ENCODE measurements at regions of chr11 and their contacts with region 1.

Region 1: GRCh38 chr11:43895601-43896000 is 15.0 kb downstream of the ALKBH3 start:
- DNase-seq: no peak
- ATAC-seq: no peak
- H3K4me3 ChIP-seq: no peak overlapping the region
- H3K27ac ChIP-seq: no peak overlapping the region
- H3K4me1 ChIP-seq: no peaks in the 10 kb centered on the region
- H3K27me3 ChIP-seq: no peaks in the 10 kb centered on the region

Region 2: GRCh38 chr11:44036811-44037657 is 141.4 kb after region 1 on chr11:
- intact Hi-C with region 1: loop called (anchors 2 to 5 kb)
- DNase-seq: peak; percentile 88 to 94 (median 92)
- ATAC-seq: peak; percentile 93 to 94
- H3K4me3 ChIP-seq: no peak overlapping the region
- H3K27ac ChIP-seq: no peak overlapping the region
- H3K4me1 ChIP-seq: peaks cover 4% of the 10 kb centered on the region
- H3K27me3 ChIP-seq: no peaks in the 10 kb centered on the region